ENCODE measurements at regions of chr2 and their contacts with region 1.

Region 1: GRCh38 chr2:45650851-45651414 is 542 bp upstream of the PRKCE start:
- DNase-seq: peak; percentile 84 to 97 (median 97)
- ATAC-seq: peak; percentile 97
- H3K4me3 ChIP-seq: peak overlapping the region; percentile 95
- H3K4me3 Mint-ChIP-seq: peak overlapping the region; percentile 83 to 100 (median 95)
- H3K27ac ChIP-seq: peak overlapping the region; percentile 79
- H3K27ac Mint-ChIP-seq: peak overlapping the region; percentile 90 to 99 (median 95)
- H3K4me1 ChIP-seq: peaks cover 10 to 11% of the 10 kb centered on the region in 2 donors
- H3K4me1 Mint-ChIP-seq: peaks cover 20 to 41% (median 34%) of the 10 kb centered on the region in 7 donors
- H3K27me3 ChIP-seq: peaks cover 0 to 3% of the 10 kb centered on the region in 2 donors
- H3K27me3 Mint-ChIP-seq: peaks cover 0 to 25% (median 0%) of the 10 kb centered on the region in 5 donors

Region 2: GRCh38 chr2:44167940-44168680 is 1482.8 kb before region 1 on chr2:
- CTCF ChIA-PET with region 1: no interaction called
- POLR2A ChIA-PET with region 1: no interaction called
- intact Hi-C with region 1: loop called (anchors 2 kb)
- DNase-seq: peak; percentile 78 to 100 (median 99)
- ATAC-seq: peak; percentile 87
- H3K4me3 ChIP-seq: peak overlapping the region; percentile 80
- H3K4me3 Mint-ChIP-seq: peak overlapping the region; percentile 92 to 100 (median 96)
- H3K27ac ChIP-seq: peak overlapping the region; percentile 96
- H3K27ac Mint-ChIP-seq: peak overlapping the region; percentile 99 to 100 (median 100)
- H3K4me1 ChIP-seq: peaks cover 16 to 28% of the 10 kb centered on the region in 2 donors
- H3K4me1 Mint-ChIP-seq: peaks cover 29 to 38% (median 35%) of the 10 kb centered on the region in 7 donors
- H3K27me3 ChIP-seq: no peaks in the 10 kb centered on the region
- H3K27me3 Mint-ChIP-seq: no peaks in the 10 kb centered on the region

Region 3: DNA sequence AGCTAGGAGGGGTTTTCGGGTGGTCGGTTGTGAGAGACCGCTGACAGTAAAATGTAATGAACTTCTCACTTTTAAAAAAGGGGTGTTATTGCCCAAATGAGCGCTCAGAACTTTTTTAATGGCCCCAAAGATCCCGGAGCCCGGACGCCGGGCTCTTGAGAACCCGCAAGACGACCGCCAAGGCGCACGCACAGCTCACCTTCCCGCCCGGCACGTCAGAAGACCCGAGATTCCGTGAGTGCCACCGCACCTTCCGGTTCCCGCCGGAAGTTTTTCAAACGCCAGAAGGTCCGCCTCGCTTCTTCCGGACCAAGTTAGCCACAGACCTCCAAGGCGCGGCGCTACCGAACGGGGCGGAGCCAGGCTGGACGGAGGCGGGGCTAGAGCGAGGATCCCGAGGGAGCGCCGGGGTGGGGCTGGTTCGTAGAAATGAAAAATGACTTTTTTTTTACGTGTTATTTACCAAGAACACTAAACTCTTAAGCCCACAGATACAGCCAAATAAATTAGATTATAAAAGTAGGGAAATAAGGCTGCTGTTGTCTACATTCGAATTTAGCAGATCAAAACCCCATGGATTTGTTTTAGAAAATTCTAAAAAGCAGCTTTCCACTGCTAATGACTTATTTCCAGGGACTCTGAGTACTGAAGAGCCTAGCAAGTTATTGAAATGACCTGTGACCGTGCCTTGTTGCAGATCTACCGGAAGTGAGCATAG is 39.8 kb before region 1 on chr2 and contains the start of gene SRBD1:
- CTCF ChIA-PET with region 1: no interaction called
- POLR2A ChIA-PET with region 1: interaction called, 4 read pairs
- intact Hi-C with region 1: loop called (anchors 1 kb)
- DNase-seq: peak; percentile 52 to 91 (median 75)
- ATAC-seq: peak; percentile 91
- H3K4me3 ChIP-seq: peak within 1 kb of the TSS; percentile 79
- H3K4me3 Mint-ChIP-seq: peak within 1 kb of the TSS; percentile 92 to 99 (median 96)
- H3K27ac ChIP-seq: peak within 1 kb of the TSS; percentile 78
- H3K27ac Mint-ChIP-seq: peak within 1 kb of the TSS; percentile 90 to 98 (median 96)
- H3K4me1 ChIP-seq: peaks cover 0 to 7% of the 10 kb centered on the region in 2 donors
- H3K4me1 Mint-ChIP-seq: peaks cover 13 to 47% (median 28%) of the 10 kb centered on the region in 7 donors
- H3K27me3 ChIP-seq: no peaks in the 10 kb centered on the region
- H3K27me3 Mint-ChIP-seq: no peaks in the 10 kb centered on the region
- total RNA-seq, gene SRBD1: 17.7 to 28.1 (median 23.3) TPM

Region 4: GRCh38 chr2:45889620-45890370 is 238.9 kb after region 1 on chr2:
- CTCF ChIA-PET with region 1: no interaction called
- POLR2A ChIA-PET with region 1: interaction called, 3 read pairs
- intact Hi-C with region 1: loop called in 1 of 2 experiments (anchors 2 kb)
- DNase-seq: no peak
- ATAC-seq: peak; percentile 39
- H3K4me3 ChIP-seq: no peak overlapping the region
- H3K4me3 Mint-ChIP-seq: peak overlapping the region in 7 of 10 donors; percentile 29 to 73 (median 60)
- H3K27ac ChIP-seq: peak overlapping the region; percentile 58
- H3K27ac Mint-ChIP-seq: peak overlapping the region in 8 of 9 donors; percentile 59 to 96 (median 85)
- H3K4me1 ChIP-seq: peaks cover 0 to 40% of the 10 kb centered on the region in 2 donors
- H3K4me1 Mint-ChIP-seq: peaks cover 29 to 58% (median 49%) of the 10 kb centered on the region in 7 donors
- H3K27me3 ChIP-seq: no peaks in the 10 kb centered on the region
- H3K27me3 Mint-ChIP-seq: no peaks in the 10 kb centered on the region

Region 5: DNA sequence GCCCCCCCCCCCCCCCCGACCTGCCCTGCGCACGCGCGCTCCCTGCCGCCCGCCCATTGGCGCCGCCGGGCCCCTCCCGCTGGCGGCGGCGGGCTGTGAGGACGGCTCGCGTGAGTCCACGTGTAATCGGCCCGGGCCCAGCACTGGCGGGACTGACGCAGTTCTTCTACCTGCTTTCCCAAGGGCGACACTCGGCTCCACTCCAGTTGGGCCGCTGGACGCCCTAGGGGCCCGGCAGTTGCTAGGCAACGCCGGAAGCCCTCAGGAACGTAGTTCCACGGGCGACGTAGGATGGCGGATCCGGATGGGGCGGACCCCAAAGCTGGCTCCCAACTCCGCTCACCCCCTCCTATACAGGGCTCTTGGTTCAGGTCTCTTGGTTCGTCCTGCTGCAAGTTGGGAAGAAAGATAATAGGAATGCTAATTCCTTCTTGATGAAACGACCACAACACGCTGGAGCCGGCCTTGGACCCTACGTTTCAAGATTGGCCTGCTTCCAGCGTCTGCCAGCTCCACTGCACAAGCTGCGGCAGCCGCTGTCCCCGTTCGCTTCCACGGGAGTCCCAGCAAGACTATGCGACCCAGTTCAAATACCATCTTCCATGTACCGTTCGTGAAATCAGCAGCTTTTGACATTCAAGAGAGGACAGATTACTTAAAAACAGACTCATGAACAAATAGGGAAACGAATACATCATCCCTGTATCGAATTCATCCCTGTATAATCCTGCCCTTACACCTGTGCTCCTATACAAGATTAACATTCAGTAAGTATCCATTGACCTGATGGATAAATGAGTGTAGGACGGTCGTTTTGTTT is 1265.1 kb after region 1 on chr2:
- CTCF ChIA-PET with region 1: no interaction called
- POLR2A ChIA-PET with region 1: no interaction called
- intact Hi-C with region 1: loop called in 1 of 2 experiments (anchors 2 kb)
- DNase-seq: peak; percentile 80 to 90 (median 86)
- ATAC-seq: peak; percentile 91
- H3K4me3 ChIP-seq: peak overlapping the region; percentile 94
- H3K4me3 Mint-ChIP-seq: peak overlapping the region; percentile 86 to 98 (median 93)
- H3K27ac ChIP-seq: peak overlapping the region; percentile 98
- H3K27ac Mint-ChIP-seq: peak overlapping the region; percentile 80 to 97 (median 90)
- H3K4me1 ChIP-seq: peaks cover 22 to 26% of the 10 kb centered on the region in 2 donors
- H3K4me1 Mint-ChIP-seq: peaks cover 34 to 67% (median 52%) of the 10 kb centered on the region in 7 donors
- H3K27me3 ChIP-seq: no peaks in the 10 kb centered on the region
- H3K27me3 Mint-ChIP-seq: no peaks in the 10 kb centered on the region

Measured in naive thymus-derived CD4-positive, alpha-beta T cell (primary cell).